Heart right ventricle (tissue), 16 donors: ENCODE measurements at regions of chr1 and their contacts with region 1.

Region 1: DNA sequence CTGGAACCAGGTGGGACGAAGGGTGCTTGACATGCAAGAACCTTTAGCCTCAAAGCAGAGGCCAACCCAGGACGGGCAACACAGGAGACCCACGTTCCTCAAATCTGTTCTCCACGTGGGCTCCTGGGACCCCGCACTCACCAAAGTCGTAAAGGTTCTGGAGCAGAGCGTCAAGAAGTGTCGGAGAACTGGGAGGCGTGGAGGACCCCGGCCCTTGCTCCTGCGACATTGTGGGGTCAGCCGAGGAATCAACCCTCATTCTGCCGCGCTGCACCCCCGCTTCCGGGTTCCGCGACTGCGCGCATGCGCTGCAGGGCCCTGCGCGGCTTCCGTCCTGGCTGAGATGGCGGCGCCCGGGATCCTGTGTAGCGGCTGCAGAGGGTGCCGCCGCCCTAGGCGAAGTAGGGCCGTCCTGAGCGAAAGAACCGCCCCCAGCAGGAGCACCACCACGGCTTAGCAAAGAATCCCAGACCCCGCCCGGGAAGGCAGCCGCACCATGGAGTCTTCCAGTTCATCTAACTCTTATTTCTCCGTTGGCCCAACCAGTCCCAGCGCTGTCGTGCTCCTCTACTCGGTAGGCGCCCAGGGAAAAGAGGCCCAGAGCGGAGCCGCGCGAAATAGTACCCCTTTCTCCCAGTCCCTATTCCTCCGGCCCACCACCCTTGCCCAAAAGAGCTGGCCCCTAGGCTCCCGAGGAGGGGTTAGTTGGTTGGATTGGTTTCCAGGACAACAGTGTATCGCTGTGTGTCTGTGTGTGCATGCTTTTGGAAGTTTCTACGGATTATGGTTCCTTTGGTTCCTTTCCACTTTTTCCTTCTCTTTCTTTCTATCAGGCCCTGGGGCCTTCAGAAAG is at the start of gene GNPAT:
- DNase-seq: peak; percentile 88 to 91
- ATAC-seq: peak; percentile 97 to 99 (median 99)
- H3K4me3 ChIP-seq: peak within 1 kb of the TSS; percentile 67 to 92 (median 84)
- H3K27ac ChIP-seq: peak within 1 kb of the TSS; percentile 60 to 93 (median 86)
- H3K4me1 ChIP-seq: peaks cover 0 to 63% (median 46%) of the 10 kb centered on the region in 9 donors
- H3K27me3 ChIP-seq: no peaks in the 10 kb centered on the region
- CTCF ChIP-seq: peak in 1 of 9 donors; percentile 14
- total RNA-seq, gene GNPAT: 49.0 to 74.0 (median 51.8) TPM

Region 2: DNA sequence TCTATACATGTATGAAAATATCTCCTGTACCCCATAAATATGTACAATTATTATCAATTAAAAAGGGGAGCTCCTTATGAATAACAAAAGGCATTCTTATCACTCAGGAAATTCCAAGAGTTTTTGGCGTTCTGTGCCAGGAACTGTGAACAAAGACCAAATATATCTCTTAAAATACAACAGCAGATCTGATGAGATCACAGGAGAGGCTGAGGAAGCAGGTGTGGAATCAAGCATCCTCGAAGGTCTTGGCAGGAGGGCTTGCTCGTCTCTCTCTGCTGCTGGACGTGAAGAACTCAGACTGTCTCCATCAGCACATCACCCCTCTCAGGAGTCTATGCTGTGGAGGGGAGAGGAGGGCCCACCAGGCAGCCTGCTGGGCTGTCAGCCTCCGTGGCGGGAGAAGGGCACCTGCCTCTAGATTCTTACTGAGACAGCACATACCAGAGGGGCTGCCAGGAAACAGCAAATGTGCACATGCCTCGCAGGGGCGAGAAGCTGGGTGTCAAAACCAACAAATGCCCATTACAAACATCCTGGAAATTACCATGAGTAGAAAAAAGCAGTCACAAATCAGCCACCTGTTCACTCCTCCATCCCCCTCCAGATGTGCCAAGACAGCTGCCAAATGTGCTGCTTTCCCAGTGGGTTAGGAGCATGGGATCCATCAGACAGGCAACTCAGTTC is 170.2 kb before region 1 on chr1:
- intact Hi-C with region 1: no loop called
- DNase-seq: peak in 1 of 2 donors; percentile 19
- ATAC-seq: peak; percentile 44 to 82 (median 68)
- H3K4me3 ChIP-seq: no peak overlapping the region
- H3K27ac ChIP-seq: peak overlapping the region in 7 of 10 donors; percentile 7 to 64 (median 24)
- H3K4me1 ChIP-seq: peaks cover 0 to 33% (median 15%) of the 10 kb centered on the region in 9 donors
- H3K27me3 ChIP-seq: peaks cover 0 to 1% (median 0%) of the 10 kb centered on the region in 7 donors
- CTCF ChIP-seq: no peak

Region 3: GRCh38 chr1:231106347-231106746 is 134.8 kb before region 1 on chr1:
- intact Hi-C with region 1: no loop called
- DNase-seq: no peak
- ATAC-seq: peak; percentile 33 to 84 (median 58)
- H3K4me3 ChIP-seq: no peak overlapping the region
- H3K27ac ChIP-seq: no peak overlapping the region
- H3K4me1 ChIP-seq: peaks cover 0 to 30% (median 11%) of the 10 kb centered on the region in 9 donors
- H3K27me3 ChIP-seq: peaks cover 0 to 4% (median 0%) of the 10 kb centered on the region in 7 donors
- CTCF ChIP-seq: no peak

Region 4: DNA sequence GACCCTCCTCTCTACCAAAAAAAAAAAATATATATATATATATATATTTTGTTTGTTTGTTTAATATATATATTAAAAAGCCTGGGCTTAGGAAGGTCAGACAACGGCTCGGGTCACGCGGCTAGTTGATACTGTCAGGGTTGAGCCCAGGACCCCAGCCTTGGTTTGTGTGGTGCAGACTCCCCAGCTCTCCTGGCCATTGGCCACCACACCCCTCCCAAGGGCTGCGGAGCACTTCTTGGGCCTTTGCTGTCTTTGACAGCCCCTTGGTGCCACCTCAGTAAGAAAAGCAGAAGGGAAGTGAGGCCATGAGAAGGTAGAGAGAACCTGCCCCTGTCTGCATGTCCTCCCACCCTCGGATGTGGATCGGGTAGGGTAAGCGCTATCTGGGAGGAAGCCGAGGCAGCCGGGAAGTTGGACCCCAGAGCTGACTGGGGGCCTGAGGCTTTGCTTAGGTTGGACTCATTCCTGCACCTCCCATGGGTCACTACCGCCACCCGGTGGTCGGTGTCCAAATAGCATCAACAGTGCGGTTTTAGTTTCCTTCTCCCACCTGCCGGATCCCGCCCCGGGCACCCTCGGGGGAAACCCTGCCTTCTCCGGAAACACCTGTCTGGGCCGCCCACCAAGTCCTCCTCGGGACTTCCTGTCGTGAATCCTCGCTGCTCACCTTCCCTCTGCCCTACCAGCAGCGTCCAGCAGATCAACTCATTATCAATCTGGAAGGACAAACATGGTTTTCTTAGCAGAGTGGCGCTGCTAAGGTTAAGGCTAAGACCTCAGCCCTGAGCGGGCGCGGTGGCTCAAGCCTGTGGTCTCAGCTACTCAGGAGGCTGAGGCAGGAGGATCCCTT is 29.9 kb before region 1 on chr1:
- intact Hi-C with region 1: no loop called
- DNase-seq: peak; percentile 71 to 79
- ATAC-seq: peak; percentile 73 to 87 (median 84)
- H3K4me3 ChIP-seq: peak overlapping the region in 9 of 10 donors; percentile 14 to 54 (median 44)
- H3K27ac ChIP-seq: no peak overlapping the region
- H3K4me1 ChIP-seq: peaks cover 0 to 11% (median 0%) of the 10 kb centered on the region in 9 donors
- H3K27me3 ChIP-seq: peaks cover 0 to 24% (median 0%) of the 10 kb centered on the region in 7 donors
- CTCF ChIP-seq: peak; percentile 75 to 96 (median 94)

Region 5: GRCh38 chr1:231286603-231287002 is 45.5 kb after region 1 on chr1:
- intact Hi-C with region 1: no loop called
- DNase-seq: no peak
- ATAC-seq: no peak
- H3K4me3 ChIP-seq: no peak overlapping the region
- H3K27ac ChIP-seq: no peak overlapping the region
- H3K4me1 ChIP-seq: no peaks in the 10 kb centered on the region
- H3K27me3 ChIP-seq: no peaks in the 10 kb centered on the region
- CTCF ChIP-seq: no peak

Region 6: DNA sequence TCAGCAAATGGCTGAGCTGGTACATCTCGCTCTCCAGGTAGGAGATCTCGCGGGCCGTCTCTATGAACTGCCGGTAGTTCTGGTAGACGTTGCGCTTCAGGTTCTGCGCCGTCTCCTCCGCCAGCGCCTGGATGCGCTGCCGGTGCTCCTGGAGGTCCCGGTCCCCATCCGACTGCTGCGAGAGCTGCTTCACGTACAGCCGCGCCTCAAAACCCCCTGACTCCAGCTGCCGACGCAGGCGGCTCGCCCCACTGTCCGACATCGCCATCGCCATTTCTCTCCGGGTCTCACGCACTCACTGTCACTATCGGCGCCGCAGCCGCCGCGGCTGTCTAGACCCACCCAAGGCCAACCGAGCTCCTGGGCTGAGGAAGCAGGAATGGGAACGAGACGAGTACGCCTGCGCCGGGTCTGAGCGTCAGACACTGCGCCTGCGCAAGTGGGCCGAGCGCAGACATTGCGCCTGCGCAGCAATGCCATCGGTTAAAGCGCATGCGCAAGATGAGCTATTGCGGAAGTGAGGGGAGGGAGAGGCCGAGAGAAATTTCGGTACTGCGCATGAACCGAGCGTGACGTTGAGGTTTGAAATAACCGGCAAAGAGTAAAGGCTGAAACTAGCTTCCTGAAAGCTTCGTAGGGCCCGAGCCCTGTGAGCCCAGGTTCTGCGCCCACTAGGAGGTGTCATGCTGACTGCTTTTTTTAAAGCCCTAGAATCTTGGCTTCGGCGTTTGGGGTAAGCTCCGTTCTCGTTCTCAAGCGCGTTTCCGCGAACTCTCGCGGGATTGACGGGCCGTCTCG is 96.6 kb after region 1 on chr1 and contains the start of gene EXOC8:
- intact Hi-C with region 1: loop called in 5 of 10 experiments (anchors 5 to 10 kb)
- DNase-seq: peak; percentile 95 to 98
- ATAC-seq: peak; percentile 95 to 98 (median 96)
- H3K4me3 ChIP-seq: peak within 1 kb of the TSS; percentile 74 to 95 (median 82)
- H3K27ac ChIP-seq: peak within 1 kb of the TSS; percentile 85 to 98 (median 92)
- H3K4me1 ChIP-seq: peaks cover 18 to 66% (median 55%) of the 10 kb centered on the region in 9 donors
- H3K27me3 ChIP-seq: no peaks in the 10 kb centered on the region
- CTCF ChIP-seq: peak in 1 of 9 donors; percentile 7
- total RNA-seq, gene EXOC8: 10.3 to 16.7 (median 12.8) TPM

Region 7: DNA sequence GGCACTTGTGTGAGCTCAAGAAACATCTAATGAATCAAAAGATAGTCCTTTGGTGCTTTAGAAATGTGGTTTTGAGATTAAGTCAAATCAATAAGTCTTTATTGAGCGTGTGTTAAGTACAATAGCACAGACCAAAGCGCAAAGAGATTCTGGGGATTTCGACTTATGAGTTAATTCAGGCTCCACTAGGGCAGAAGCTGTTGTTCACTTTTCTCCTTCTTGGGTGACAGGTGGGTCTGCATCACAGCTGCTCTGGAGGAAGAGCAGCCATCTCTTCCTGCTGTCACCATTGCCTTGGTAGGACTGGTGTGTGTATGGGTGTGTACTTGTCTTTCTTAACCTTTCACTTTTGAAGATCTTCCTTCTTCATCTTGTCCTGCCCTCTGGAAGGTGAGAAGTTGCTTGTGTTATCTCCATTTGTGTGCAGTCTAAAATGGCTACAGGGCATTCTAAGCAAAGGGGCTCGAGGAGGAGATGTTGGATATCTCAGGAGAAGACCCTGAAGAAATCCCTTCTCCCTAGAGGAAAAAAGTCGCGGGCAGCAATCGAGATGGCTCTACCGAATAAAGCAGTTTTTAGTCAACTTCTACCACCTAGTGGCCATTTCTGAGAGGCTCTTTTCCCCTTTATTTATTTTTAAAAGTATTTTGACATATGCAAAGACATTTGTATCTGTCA is 362.6 kb after region 1 on chr1:
- intact Hi-C with region 1: loop called in 1 of 10 experiments (anchors 10 kb)
- DNase-seq: peak in 1 of 2 donors; percentile 27
- ATAC-seq: peak in 7 of 8 donors; percentile 37 to 68 (median 59)
- H3K4me3 ChIP-seq: peak overlapping the region in 9 of 10 donors; percentile 28 to 58 (median 49)
- H3K27ac ChIP-seq: peak overlapping the region in 9 of 10 donors; percentile 4 to 70 (median 36)
- H3K4me1 ChIP-seq: peaks cover 8 to 48% (median 29%) of the 10 kb centered on the region in 9 donors
- H3K27me3 ChIP-seq: no peaks in the 10 kb centered on the region
- CTCF ChIP-seq: peak; percentile 66 to 86 (median 82)